A673 (cell line): ENCODE measurements at regions of chr2 and their contacts with region 1.

Region 1: DNA sequence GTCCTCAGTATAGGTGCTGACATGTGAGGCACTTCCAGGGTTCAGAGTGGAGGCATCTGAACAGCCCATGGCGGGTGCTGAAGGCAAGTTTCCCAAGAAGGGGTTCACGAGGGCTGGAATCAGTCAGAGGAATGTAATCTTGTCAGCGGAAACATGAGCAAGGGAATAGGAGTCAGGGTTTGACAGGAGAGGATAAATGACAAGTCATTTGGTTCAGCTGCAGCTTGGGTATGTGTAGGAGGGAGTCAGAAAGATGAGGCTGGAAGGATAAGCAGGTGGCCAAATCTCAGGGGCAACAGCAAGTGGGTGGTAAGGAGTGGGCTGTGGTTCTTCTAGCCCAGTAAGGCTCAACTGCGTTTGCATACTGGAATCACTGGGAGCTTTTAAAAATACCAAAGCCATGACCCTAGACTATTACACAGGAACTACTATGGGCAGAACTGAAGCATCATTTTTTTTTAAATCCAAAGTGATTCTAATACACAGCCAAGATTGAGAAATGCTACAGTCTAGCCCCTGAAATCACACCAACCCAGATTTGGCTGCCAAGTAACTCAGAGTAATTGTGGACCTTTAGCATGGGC is 41.8 kb upstream of the NAB1 start:
- DNase-seq: no peak
- H3K4me3 ChIP-seq: no peak overlapping the region
- H3K27ac ChIP-seq: no peak overlapping the region
- H3K4me1 ChIP-seq: no peaks in the 10 kb centered on the region
- H3K27me3 ChIP-seq: no peaks in the 10 kb centered on the region
- CTCF ChIP-seq: no peak

Region 2: DNA sequence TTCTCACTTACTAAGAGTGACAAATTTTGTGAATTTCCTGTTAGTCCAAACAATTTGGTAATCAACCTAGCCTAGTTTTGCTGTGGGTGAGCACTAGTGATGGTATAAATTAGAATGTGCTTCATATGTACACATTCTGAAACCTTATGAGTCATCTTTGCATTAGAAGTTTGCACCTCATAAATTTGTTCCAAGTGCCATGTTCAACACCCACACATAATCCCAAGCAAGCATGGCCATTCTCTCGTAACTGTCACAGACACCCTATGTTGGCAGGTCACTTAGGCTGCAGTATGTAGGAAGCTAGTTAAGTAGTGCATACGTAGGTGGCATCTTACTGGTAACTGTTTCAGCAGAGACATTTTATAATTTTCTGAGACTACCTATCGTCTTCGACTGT is 88.6 kb after region 1 on chr2:
- CTCF ChIA-PET with region 1: no interaction called
- POLR2A ChIA-PET with region 1: interaction called, 11 read pairs
- intact Hi-C with region 1: no loop called
- DNase-seq: peak; percentile 29
- H3K4me3 ChIP-seq: no peak overlapping the region
- H3K27ac ChIP-seq: no peak overlapping the region
- H3K4me1 ChIP-seq: no peaks in the 10 kb centered on the region
- H3K27me3 ChIP-seq: no peaks in the 10 kb centered on the region
- CTCF ChIP-seq: no peak